ENCODE measurements at regions of chr14 and their contacts with region 1.

Region 1: GRCh38 chr14:61296719-61297502 is 15.8 kb upstream of the TMEM30B start:
- DNase-seq: no peak
- ATAC-seq: no peak

Region 2: GRCh38 chr14:61260939-61261776 is 35.8 kb before region 1 on chr14:
- intact Hi-C with region 1: no loop called
- DNase-seq: no peak
- ATAC-seq: no peak

Region 3: DNA sequence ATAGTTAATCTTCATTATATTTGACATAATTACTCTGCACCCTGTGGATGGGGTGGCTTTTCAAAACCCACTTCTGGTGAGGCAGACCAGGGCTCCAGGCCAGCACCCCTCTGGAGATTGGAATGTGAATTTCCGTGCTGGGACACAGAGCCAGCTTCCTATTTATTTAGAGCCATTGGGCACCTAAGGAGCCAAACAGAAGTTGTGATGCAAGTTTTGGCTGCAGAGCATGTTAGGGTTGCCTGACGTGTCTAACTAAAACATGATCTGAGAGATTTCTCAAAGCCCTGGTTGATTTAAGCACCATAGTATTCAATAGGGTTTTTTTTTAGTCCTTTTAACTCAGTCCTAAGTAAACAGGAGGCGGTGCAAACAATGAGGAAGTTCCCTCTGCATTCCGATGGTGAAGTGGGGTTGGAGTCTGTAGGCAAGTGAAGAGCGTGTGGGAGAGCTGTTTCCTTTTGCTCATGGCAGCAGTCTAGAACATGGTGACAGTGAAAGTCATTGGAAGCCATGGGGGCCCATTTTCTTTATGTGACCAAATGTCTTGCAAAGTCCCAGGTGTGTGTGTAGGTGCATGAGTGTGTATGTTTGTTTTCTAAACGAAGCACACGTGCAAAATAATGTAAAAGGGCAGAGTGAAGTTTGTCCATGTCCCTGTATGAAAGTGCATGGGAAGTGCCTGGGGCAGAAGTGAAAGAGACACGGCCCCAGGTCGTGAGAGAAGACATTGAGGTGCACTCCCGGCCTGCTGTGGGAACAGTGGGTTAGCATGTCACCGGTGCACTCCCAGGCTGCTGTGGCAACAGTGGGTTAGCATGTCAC is 142.2 kb after region 1 on chr14:
- intact Hi-C with region 1: loop called (anchors 5 kb)
- DNase-seq: no peak
- ATAC-seq: peak; percentile 69

Measured in Right ventricle myocardium inferior (tissue), 1 donor.